IMR-90 (cell line): ENCODE measurements at regions of chr11 and their contacts with region 1.

Region 1: GRCh38 chr11:72430741-72431570 is 3.4 kb downstream of the CLPB start:
- DNase-seq: peak; percentile 59
- ATAC-seq: peak; percentile 61
- H3K4me3 ChIP-seq: no peak overlapping the region
- H3K27ac ChIP-seq: no peak overlapping the region
- H3K4me1 ChIP-seq: peaks cover 3% of the 10 kb centered on the region; the same call in 1 of the 2 replicates
- H3K27me3 ChIP-seq: no peaks in the 10 kb centered on the region
- CTCF ChIP-seq: peak; percentile 89
- POLR2A ChIP-seq: no peak
- RAD21 ChIP-seq: peak; percentile 92

Region 2: GRCh38 chr11:72091005-72091691 is 339.8 kb before region 1 on chr11:
- CTCF ChIA-PET with region 1: interaction called, 4 read pairs
- POLR2A ChIA-PET with region 1: no interaction called
- dilution Hi-C with region 1: no loop called
- in situ Hi-C with region 1: no loop called
- intact Hi-C with region 1: loop called (anchors 1 kb)
- DNase-seq: peak; percentile 54
- ATAC-seq: peak; percentile 95
- H3K4me3 ChIP-seq: no peak overlapping the region
- H3K27ac ChIP-seq: no peak overlapping the region
- H3K4me1 ChIP-seq: no peaks in the 10 kb centered on the region
- H3K27me3 ChIP-seq: no peaks in the 10 kb centered on the region
- CTCF ChIP-seq: peak; percentile 91
- POLR2A ChIP-seq: no peak
- RAD21 ChIP-seq: peak; percentile 79

Region 3: DNA sequence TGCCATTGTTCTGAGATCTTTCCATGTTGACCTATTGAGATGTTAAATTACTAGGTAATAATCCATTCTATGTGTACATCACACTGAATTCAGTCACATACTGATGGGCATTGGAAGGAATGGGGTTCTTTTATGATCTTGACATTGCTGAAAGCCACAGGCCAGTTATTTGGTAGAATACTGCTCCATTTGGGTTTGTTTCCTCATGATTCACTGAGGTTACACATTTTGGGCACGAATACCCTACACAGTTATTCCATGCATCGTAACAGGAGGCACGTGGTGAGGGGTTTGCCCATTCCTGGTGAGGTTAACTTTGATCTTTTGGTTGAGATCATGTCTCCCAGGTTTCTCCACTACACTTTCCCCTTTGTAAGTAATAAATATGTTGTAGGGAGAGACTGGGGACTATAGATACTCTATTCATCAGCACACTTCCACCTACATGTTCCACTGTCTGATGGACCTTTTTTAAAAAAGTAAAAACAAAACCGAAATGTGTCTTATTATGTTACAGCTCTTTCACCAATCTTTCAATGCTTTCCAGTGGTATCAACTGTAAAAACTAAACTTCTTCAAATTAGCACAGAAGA is 251.1 kb before region 1 on chr11:
- CTCF ChIA-PET with region 1: interaction called, 7 read pairs
- POLR2A ChIA-PET with region 1: no interaction called
- dilution Hi-C with region 1: no loop called
- in situ Hi-C with region 1: no loop called
- intact Hi-C with region 1: loop called (anchors 1 kb)
- DNase-seq: no peak
- ATAC-seq: no peak
- H3K4me3 ChIP-seq: no peak overlapping the region
- H3K27ac ChIP-seq: no peak overlapping the region
- H3K4me1 ChIP-seq: 0 out of 2 replicates have a peak, but pooled peaks cover 1% of the 10 kb centered on the region
- H3K27me3 ChIP-seq: no peaks in the 10 kb centered on the region; the same call in 1 of the 2 replicates
- CTCF ChIP-seq: no peak
- POLR2A ChIP-seq: no peak
- RAD21 ChIP-seq: no peak

Region 4: GRCh38 chr11:72293910-72294615 is 136.9 kb before region 1 on chr11:
- CTCF ChIA-PET with region 1: interaction called, 3 read pairs
- POLR2A ChIA-PET with region 1: no interaction called
- dilution Hi-C with region 1: no loop called
- in situ Hi-C with region 1: no loop called
- intact Hi-C with region 1: loop called (anchors 1 kb)
- DNase-seq: no peak
- ATAC-seq: no peak
- H3K4me3 ChIP-seq: no peak overlapping the region
- H3K27ac ChIP-seq: no peak overlapping the region
- H3K4me1 ChIP-seq: no peaks in the 10 kb centered on the region
- H3K27me3 ChIP-seq: no peaks in the 10 kb centered on the region
- CTCF ChIP-seq: no peak
- POLR2A ChIP-seq: no peak
- RAD21 ChIP-seq: no peak